ENCODE measurements at regions of chr1 and their contacts with region 1.

Region 1: GRCh38 chr1:51235673-51236530 is at the start of gene RNF11:
- DNase-seq: peak; percentile 85
- H3K4me3 Mint-ChIP-seq: peak within 1 kb of the TSS; percentile 80
- H3K27ac Mint-ChIP-seq: peak within 1 kb of the TSS; percentile 70
- H3K4me1 Mint-ChIP-seq: peaks cover 35% of the 10 kb centered on the region
- H3K27me3 Mint-ChIP-seq: no peaks in the 10 kb centered on the region
- CTCF ChIP-seq: no peak
- total RNA-seq, gene RNF11: 73.1 and 86.0 TPM in 2 replicates

Region 2: DNA sequence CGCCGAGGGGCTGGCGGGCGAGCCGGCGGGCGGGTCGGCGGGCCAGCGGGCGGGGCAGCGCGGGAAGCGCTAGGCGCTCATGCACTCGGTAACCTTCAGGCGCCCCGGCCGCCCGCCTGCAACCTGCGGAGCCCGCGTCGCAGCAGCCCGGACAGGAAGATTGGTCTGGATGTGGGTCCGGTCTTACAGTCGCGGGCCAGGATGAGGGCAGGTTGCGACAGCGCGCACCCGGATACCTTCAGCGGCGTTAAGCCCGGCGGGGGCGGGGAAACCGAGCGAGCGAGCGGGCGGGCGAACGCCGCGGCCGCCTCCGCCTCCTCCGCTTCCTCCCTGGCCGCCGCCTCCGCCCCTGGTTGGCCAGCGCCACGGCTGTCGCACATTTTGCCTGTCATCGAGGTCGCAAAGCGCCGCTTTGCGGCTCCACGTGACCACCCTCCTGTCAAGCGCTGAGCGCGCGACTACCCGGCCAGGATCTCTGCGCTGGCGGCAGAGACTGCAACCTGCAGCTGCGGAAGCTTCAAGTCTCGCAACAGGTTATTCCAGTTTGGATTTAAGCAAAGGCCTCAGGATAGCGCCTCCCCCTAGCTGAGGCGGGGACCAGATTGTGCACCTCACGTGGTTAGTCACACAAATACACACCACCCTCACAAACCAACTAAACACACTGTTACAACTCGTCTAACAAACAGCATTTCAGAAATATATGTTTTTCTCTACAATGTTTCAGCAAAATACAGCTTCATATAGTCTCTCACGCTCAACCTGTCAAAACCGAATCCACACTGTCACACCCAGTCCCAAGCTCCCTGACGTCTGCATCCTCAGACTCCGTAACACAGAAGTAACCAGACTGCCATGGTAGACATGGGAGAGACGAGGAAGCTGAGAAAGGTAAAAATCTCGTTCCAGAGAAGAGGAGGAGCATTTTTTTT is 275.7 kb before region 1 on chr1 and contains the start of gene FAF1:
- CTCF ChIA-PET with region 1: no interaction called
- POLR2A ChIA-PET with region 1: interaction called, 20 read pairs
- intact Hi-C with region 1: no loop called
- DNase-seq: peak; percentile 96
- H3K4me3 Mint-ChIP-seq: peak within 1 kb of the TSS; percentile 76
- H3K27ac Mint-ChIP-seq: peak within 1 kb of the TSS; percentile 1
- H3K4me1 Mint-ChIP-seq: peaks cover 11% of the 10 kb centered on the region
- H3K27me3 Mint-ChIP-seq: no peaks in the 10 kb centered on the region
- CTCF ChIP-seq: no peak
- total RNA-seq, gene FAF1: 74.4 and 93.2 TPM in 2 replicates

Region 3: DNA sequence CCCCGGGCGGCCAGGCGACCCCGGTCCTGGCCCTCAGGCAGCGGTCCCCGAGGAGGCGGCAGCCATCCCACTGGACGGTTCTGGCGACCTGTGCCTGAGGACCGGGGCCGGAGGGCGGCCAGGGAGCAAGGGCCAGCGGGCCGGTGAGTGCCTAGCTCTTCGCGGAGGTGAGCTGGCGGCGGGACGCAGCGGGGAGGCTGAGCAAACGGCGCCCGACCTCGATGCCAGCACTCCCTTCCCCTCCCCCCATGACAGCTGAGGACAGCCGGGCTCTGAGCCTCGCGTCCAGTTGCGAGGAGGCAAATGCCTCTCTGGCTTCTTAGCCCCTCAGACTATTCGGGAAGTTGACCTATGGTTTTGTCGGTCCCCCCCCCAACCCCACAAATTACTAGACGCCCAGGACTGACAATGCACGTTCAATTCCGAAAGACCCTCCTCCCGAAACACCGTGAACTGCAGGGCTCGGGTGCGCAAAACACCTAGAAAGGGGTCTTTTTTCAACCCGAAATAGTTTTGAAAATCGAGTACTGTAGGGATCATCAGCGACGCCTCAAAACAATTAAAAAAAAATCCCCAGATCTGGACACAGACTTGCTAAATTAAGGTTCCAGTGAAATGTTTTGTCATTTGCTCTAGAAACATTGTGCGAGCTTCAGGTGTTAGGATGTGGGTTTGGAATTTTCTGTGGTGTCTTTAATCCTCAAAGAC is 257.6 kb before region 1 on chr1:
- CTCF ChIA-PET with region 1: no interaction called
- POLR2A ChIA-PET with region 1: interaction called, 22 read pairs
- intact Hi-C with region 1: no loop called
- DNase-seq: peak; percentile 73
- H3K4me3 Mint-ChIP-seq: peak overlapping the region; percentile 75
- H3K27ac Mint-ChIP-seq: peak overlapping the region; percentile 71
- H3K4me1 Mint-ChIP-seq: peaks cover 12% of the 10 kb centered on the region
- H3K27me3 Mint-ChIP-seq: no peaks in the 10 kb centered on the region
- CTCF ChIP-seq: no peak

Region 4: DNA sequence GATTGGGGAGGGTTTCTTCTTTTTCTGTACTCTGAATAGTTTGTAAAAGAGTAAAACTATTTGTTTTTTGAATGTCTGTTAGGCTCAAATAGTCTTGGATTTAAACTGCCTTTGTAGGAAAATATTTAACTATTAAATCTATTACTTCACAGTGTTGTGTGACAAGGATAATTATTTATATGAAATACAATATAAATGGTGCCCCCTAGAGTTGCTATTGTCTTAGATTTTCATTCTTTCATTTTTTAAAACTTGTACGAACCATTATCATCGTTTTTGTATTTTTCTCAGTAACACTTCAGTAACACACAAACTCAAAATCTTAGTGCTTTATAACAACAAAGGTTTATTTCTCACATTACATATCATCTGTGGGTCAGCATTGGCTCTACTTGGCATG is 96.4 kb before region 1 on chr1:
- CTCF ChIA-PET with region 1: no interaction called
- POLR2A ChIA-PET with region 1: no interaction called
- intact Hi-C with region 1: no loop called
- DNase-seq: no peak
- H3K4me3 Mint-ChIP-seq: peak overlapping the region; percentile 18
- H3K27ac Mint-ChIP-seq: no peak overlapping the region
- H3K4me1 Mint-ChIP-seq: no peaks in the 10 kb centered on the region
- H3K27me3 Mint-ChIP-seq: no peaks in the 10 kb centered on the region
- CTCF ChIP-seq: peak; percentile 15

Region 5: GRCh38 chr1:51224255-51224654 is 11.6 kb before region 1 on chr1:
- CTCF ChIA-PET with region 1: interaction called, 3 read pairs
- POLR2A ChIA-PET with region 1: interaction called, 15 read pairs
- intact Hi-C with region 1: no loop called
- DNase-seq: no peak
- H3K4me3 Mint-ChIP-seq: no peak overlapping the region
- H3K27ac Mint-ChIP-seq: no peak overlapping the region
- H3K4me1 Mint-ChIP-seq: no peaks in the 10 kb centered on the region
- H3K27me3 Mint-ChIP-seq: no peaks in the 10 kb centered on the region
- CTCF ChIP-seq: no peak

Region 6: GRCh38 chr1:51253691-51254090 is 17.8 kb after region 1 on chr1:
- CTCF ChIA-PET with region 1: interaction called, 3 read pairs
- POLR2A ChIA-PET with region 1: interaction called, 34 read pairs
- intact Hi-C with region 1: no loop called
- DNase-seq: peak; percentile 43
- H3K4me3 Mint-ChIP-seq: no peak overlapping the region
- H3K27ac Mint-ChIP-seq: no peak overlapping the region
- H3K4me1 Mint-ChIP-seq: peaks cover 24% of the 10 kb centered on the region
- H3K27me3 Mint-ChIP-seq: no peaks in the 10 kb centered on the region
- CTCF ChIP-seq: no peak

Region 7: DNA sequence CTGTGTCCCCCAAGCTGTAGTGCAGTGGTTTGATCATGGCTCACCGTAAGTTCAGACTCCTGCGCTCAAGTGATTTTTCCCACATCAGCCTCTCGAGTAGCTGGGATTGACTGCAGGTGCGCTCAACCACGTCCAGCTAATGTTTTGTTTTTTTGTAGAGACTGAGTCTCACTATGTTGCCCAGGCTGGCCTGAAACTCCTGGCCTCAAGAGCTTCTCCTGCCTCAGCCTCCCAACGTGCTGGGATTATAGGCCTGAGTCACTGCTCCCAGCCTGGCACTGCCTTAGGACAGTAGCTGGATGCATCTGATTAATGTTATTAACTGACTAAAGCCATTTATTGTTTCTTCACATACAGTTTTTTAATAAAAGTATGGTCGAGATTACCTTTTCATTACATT is 40.4 kb after region 1 on chr1:
- CTCF ChIA-PET with region 1: no interaction called
- POLR2A ChIA-PET with region 1: interaction called, 29 read pairs
- intact Hi-C with region 1: no loop called
- DNase-seq: peak; percentile 28
- H3K4me3 Mint-ChIP-seq: no peak overlapping the region
- H3K27ac Mint-ChIP-seq: no peak overlapping the region
- H3K4me1 Mint-ChIP-seq: peaks cover 7% of the 10 kb centered on the region
- H3K27me3 Mint-ChIP-seq: no peaks in the 10 kb centered on the region
- CTCF ChIP-seq: no peak

Region 8: DNA sequence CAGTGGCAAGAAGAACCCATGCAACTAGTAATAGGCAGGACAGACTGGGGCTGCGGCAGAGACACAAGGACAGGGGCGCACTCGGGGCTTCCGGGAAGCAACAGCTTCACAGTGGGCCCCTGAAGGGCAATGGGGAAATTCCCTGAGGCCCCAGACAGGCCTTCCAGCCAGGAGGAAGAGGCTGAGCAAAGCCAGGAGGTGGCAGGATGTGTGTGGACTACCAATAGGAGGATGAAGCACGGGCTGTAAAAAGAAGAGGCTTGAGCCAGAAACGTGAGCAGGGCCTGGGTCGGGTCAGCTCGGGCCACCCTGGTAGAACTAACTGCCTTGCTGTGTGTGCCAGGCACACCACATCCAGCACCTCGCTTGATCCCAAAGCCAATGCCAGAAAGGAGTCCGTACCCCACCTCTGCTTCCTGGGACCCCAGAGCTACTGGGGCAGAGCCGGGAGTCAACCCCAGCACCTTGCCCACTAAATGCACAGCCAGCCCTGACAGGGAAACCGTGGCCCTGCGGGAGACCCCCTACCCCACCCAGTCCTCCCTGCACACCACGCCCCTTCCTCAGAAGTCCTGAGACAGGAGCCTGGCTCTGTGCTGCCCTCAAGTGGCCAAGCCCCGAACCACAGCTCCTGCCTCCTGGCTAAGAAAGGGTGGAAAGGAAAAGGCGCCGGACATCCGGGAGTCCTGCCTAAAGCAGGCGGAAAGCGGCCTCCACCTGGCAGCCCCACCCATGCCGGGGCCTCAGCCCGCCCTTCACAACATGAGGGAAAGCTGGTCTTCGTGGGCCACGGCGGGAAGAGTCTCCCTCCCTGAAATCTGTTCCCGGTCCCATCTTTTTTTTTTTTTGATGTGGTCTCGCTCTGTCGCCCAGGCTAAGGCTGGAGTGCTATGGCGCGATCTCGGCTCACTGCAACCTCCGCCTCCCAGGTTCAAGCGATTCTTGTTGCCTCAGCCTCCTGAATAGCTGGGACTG is 60.8 kb after region 1 on chr1:
- CTCF ChIA-PET with region 1: interaction called, 6 read pairs
- POLR2A ChIA-PET with region 1: interaction called, 7 read pairs
- intact Hi-C with region 1: loop called (anchors 10 kb)
- DNase-seq: peak; percentile 83
- H3K4me3 Mint-ChIP-seq: peak overlapping the region; percentile 41
- H3K27ac Mint-ChIP-seq: no peak overlapping the region
- H3K4me1 Mint-ChIP-seq: peaks cover 13% of the 10 kb centered on the region
- H3K27me3 Mint-ChIP-seq: no peaks in the 10 kb centered on the region
- CTCF ChIP-seq: peak; percentile 98

Measured in MCF 10A (cell line).